Heart right ventricle (tissue), 16 donors: ENCODE measurements at regions of chr20 and their contacts with region 1.

Region 1: DNA sequence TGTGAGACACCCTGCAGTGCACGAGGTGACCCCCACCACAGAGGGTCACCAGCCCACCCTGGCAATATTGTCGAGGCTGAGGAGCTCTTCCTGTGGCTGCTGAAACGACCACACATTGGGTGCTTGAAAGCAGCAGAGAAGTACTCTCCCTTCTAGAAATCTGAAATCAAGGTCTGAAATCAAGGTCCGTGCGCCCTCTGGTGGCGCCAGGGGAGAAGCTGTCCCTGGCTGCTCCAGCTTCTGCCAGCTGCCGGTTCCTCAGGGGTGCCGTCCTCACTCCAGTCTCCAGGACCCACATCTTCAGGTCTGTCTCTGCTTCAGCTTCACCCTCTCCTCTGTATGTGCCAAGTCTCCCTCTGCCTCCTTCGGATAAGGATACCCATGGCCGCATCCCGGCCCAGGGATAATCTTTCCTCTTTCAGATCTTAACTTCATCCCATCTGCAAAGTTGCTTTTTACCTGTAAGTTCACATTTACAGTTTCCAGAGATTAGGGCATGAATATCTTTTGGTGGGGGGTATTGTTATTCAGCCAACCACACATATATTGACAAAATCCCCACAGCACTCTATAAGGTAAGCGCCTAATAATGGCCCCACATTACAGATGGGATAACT is 108.3 kb upstream of the PHACTR3 start:
- DNase-seq: peak; percentile 54 to 66
- ATAC-seq: peak; percentile 27 to 62 (median 40)
- H3K4me3 ChIP-seq: no peak overlapping the region
- H3K27ac ChIP-seq: no peak overlapping the region
- H3K4me1 ChIP-seq: no peaks in the 10 kb centered on the region
- H3K27me3 ChIP-seq: peaks cover 5 to 60% (median 38%) of the 10 kb centered on the region in 7 donors
- CTCF ChIP-seq: peak; percentile 65 to 93 (median 88)

Region 2: GRCh38 chr20:59087829-59088433 is 408.1 kb before region 1 on chr20:
- intact Hi-C with region 1: loop called in 1 of 10 experiments (anchors 10 kb)
- DNase-seq: peak; percentile 81 to 84
- ATAC-seq: peak in 6 of 8 donors; percentile 74 to 88 (median 86)
- H3K4me3 ChIP-seq: no peak overlapping the region
- H3K27ac ChIP-seq: no peak overlapping the region
- H3K4me1 ChIP-seq: peaks cover 0 to 17% (median 0%) of the 10 kb centered on the region in 9 donors
- H3K27me3 ChIP-seq: peaks cover 0 to 9% (median 0%) of the 10 kb centered on the region in 7 donors
- CTCF ChIP-seq: peak; percentile 80 to 97 (median 94)